Panc1 (cell line): ENCODE measurements at regions of chr12 and their contacts with region 1.

Region 1: GRCh38 chr12:104345234-104346066 is 41.9 kb downstream of the EID3 start:
- DNase-seq: no peak
- ATAC-seq: no peak
- H3K4me3 ChIP-seq: no peak overlapping the region
- H3K27ac ChIP-seq: no peak overlapping the region
- H3K4me1 ChIP-seq: peaks cover 29% of the 10 kb centered on the region
- H3K27me3 ChIP-seq: no peaks in the 10 kb centered on the region
- CTCF ChIP-seq: no peak

Region 2: DNA sequence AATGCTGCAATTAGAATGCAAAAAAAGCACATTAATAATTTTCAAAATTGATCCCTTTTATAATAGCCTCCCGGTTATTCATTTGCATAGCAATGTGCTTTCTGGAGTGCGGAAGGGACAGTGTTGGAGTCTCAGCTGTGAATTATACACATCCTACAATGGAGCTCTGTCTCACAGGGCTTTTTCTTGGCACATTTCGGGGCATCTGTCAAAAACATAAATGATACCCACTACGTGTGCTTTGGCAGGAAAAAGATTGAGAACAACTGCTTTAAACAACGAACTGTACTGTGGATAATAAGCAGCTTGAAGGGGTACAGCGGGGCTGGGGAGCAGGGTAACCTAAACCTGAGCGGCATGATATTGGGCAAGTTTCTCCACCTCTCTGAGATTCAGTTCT is 1551.5 kb before region 1 on chr12:
- CTCF ChIA-PET with region 1: no interaction called
- POLR2A ChIA-PET with region 1: no interaction called
- in situ Hi-C with region 1: no loop called
- intact Hi-C with region 1: no loop called
- DNase-seq: no peak
- ATAC-seq: no peak
- H3K4me3 ChIP-seq: no peak overlapping the region
- H3K27ac ChIP-seq: no peak overlapping the region
- H3K4me1 ChIP-seq: no peaks in the 10 kb centered on the region
- H3K27me3 ChIP-seq: no peaks in the 10 kb centered on the region
- CTCF ChIP-seq: no peak

Region 3: GRCh38 chr12:104315326-104316239 is 29.9 kb before region 1 on chr12:
- CTCF ChIA-PET with region 1: no interaction called
- POLR2A ChIA-PET with region 1: interaction called, 16 read pairs
- in situ Hi-C with region 1: no loop called
- intact Hi-C with region 1: no loop called
- DNase-seq: no peak
- ATAC-seq: no peak
- H3K4me3 ChIP-seq: peak overlapping the region; percentile 13 to 16; a peak in 2 of 4 replicates
- H3K27ac ChIP-seq: peak overlapping the region; percentile 68
- H3K4me1 ChIP-seq: peaks cover 63% of the 10 kb centered on the region
- H3K27me3 ChIP-seq: no peaks in the 10 kb centered on the region
- CTCF ChIP-seq: no peak